Endothelial cell of umbilical vein (primary cell): ENCODE measurements at regions of chr17 and their contacts with region 1.

Region 1: GRCh38 chr17:69607162-69607834 is 192.8 kb downstream of the MAP2K6 start:
- DNase-seq: peak; percentile 89
- H3K4me3 ChIP-seq: no peak overlapping the region
- H3K27ac ChIP-seq: peak overlapping the region; percentile 92
- H3K4me1 ChIP-seq: peaks cover 28% of the 10 kb centered on the region
- H3K27me3 ChIP-seq: no peaks in the 10 kb centered on the region
- CTCF ChIP-seq: peak; percentile 71 to 80
- POLR2A ChIP-seq: no peak

Region 2: GRCh38 chr17:69592692-69593350 is 14.5 kb before region 1 on chr17:
- CTCF ChIA-PET with region 1: interaction called, 34 read pairs
- POLR2A ChIA-PET with region 1: interaction called, 3 read pairs
- dilution Hi-C with region 1: no loop called
- intact Hi-C with region 1: loop called (anchors 1 kb)
- DNase-seq: no peak
- H3K4me3 ChIP-seq: no peak overlapping the region
- H3K27ac ChIP-seq: peak overlapping the region; percentile 33
- H3K4me1 ChIP-seq: peaks cover 22% of the 10 kb centered on the region
- H3K27me3 ChIP-seq: no peaks in the 10 kb centered on the region
- CTCF ChIP-seq: no peak
- POLR2A ChIP-seq: no peak

Region 3: GRCh38 chr17:69761751-69762321 is 154.5 kb after region 1 on chr17:
- CTCF ChIA-PET with region 1: interaction called, 6 read pairs
- POLR2A ChIA-PET with region 1: no interaction called
- dilution Hi-C with region 1: no loop called
- intact Hi-C with region 1: loop called (anchors 2 kb)
- DNase-seq: peak; percentile 86
- H3K4me3 ChIP-seq: no peak overlapping the region
- H3K27ac ChIP-seq: peak overlapping the region; percentile 91
- H3K4me1 ChIP-seq: peaks cover 21% of the 10 kb centered on the region
- H3K27me3 ChIP-seq: no peaks in the 10 kb centered on the region
- CTCF ChIP-seq: no peak
- POLR2A ChIP-seq: no peak

Region 4: GRCh38 chr17:70034158-70034557 is 426.9 kb after region 1 on chr17:
- CTCF ChIA-PET with region 1: interaction called, 7 read pairs
- POLR2A ChIA-PET with region 1: no interaction called
- dilution Hi-C with region 1: no loop called
- intact Hi-C with region 1: loop called (anchors 1 kb)
- DNase-seq: peak; percentile 98
- H3K4me3 ChIP-seq: no peak overlapping the region
- H3K27ac ChIP-seq: peak overlapping the region; percentile 90
- H3K4me1 ChIP-seq: peaks cover 17% of the 10 kb centered on the region
- H3K27me3 ChIP-seq: no peaks in the 10 kb centered on the region
- CTCF ChIP-seq: no peak
- POLR2A ChIP-seq: peak; percentile 68

Region 5: DNA sequence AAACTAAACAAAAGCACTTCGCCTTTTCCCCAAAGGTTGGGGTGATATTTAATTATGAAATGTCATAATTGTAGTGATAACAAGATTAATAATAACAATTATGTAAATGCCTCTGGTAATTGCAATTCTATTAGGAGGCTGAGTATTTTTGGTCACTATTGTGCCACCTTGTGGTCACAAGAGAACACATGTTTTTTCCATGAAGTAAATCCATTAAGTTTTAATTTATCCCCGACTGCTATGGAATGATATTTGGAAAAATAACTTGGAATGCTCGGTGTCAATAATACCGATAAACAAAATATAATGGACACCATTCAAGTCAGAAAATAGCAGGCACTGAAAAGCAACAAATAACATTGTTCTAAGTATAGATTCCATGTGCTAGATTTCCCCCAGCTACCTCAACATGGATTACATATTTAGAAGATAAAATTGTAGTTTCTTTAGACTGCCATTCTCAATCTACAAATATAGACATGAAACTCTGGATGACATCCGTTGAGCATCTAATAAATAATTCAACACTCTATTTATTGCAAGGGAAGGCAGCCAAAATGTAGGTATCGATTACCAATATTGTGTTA is 537.1 kb after region 1 on chr17:
- CTCF ChIA-PET with region 1: interaction called, 115 read pairs
- POLR2A ChIA-PET with region 1: no interaction called
- dilution Hi-C with region 1: no loop called
- intact Hi-C with region 1: loop called (anchors 1 kb)
- DNase-seq: peak; percentile 76
- H3K4me3 ChIP-seq: no peak overlapping the region
- H3K27ac ChIP-seq: no peak overlapping the region
- H3K4me1 ChIP-seq: peaks cover 2% of the 10 kb centered on the region
- H3K27me3 ChIP-seq: no peaks in the 10 kb centered on the region
- CTCF ChIP-seq: peak; percentile 5 to 16
- POLR2A ChIP-seq: no peak

Region 6: DNA sequence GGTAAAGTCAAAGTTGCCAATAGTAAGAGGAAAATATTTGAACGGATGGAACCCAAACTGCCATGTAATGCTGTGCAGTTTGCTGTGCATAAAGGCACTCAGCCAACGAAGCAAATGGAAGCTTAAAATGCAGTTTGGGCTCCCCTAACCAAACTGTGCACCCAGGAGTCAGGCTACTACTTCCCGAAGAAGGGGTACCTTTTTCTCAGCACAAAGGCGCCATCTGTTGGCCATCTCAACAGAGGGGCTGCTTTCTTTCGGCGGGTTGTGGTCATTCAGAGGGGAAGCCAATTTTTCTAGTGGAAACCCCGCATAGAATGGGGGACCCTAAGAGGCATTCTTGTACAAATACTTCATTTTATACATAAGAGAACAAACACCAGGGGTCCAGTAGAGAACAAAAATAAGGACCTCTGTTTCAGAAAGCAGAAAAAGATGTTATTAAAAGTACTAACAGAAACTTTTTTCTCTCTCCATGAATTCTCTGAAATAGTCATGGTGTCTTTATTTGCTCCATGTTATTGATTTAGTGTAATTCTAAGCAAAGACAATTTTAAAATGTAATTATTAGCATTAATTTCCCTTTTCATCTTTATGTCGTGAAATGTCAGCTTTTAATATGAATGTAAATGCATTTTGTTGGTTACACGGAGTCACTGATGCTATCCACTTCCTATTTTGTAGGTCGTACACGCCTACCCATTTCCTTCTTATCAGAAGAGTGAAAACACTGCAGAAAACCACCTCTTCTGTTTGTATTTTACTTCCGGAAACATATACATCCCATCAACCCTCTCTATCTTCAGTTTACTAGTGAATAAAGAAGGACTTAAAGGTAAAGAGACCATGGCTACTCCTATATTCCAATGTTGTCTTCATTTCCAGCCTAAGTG is 1015.3 kb after region 1 on chr17:
- CTCF ChIA-PET with region 1: interaction called, 31 read pairs
- POLR2A ChIA-PET with region 1: no interaction called
- dilution Hi-C with region 1: no loop called
- intact Hi-C with region 1: loop called (anchors 1 kb)
- DNase-seq: peak; percentile 76
- H3K4me3 ChIP-seq: no peak overlapping the region
- H3K27ac ChIP-seq: no peak overlapping the region
- H3K4me1 ChIP-seq: peaks cover 5% of the 10 kb centered on the region
- H3K27me3 ChIP-seq: no peaks in the 10 kb centered on the region
- CTCF ChIP-seq: peak; percentile 64 to 79
- POLR2A ChIP-seq: no peak